Activated T-helper 1 cell treated with anti-CD3 and anti-CD28 coated beads, Interleukin-12 subunit alpha, Interleukin-12 subunit beta, Interleukin-2, Interleukin-4 antibody, amounts not matched to agents 30 ng/mL and 10 ng/mL and 1 ng/mL, durations not matched to agents 14 hours and 24 hours and 36 hours (primary cell): ENCODE measurements at regions of chr4 and their contacts with region 1.

Region 1: DNA sequence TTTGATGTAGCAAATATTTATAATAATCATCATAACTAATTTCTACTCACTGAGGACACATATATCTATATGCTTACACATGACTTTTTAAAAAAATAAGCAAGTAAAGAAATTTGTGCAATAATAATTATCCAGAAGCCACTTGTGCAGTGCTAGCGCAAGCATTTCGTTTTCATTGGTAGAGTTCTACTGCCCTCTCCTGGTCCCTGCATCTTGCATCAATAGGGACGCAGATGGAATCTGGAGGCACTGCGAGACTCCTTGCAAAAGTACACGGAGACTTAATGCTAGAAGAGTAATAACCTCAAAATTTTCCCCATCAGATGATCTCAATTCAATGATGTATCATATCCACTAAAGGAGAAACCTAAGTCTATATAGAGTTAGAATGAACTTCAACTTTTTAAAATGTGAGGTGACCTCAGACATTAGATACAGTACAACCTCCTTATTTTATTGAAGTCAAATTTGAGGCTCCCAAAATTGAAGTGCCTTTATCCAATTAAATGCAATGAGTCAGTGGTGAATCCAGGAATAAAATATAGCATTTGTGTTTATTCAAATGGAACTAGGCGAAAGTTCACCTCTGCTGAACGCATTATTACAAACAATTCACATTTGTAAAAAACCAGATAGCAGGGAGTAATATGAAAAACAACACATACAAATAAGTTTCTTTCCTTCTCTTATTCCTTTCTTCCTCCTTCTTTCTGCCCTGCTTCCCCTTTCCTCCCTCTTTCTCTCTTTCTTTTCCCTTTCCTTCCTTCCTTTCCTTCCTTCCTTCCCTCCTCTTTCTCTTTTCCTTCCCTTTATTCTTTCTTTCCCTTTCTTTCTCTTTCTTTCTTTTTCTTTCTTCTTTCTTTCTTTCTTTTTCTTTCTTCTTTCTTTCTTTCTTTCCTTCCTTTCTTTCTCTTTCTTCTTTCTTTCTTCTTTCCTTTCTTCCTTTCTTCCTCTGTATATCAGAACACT is 450.0 kb downstream of the ANKRD50 start:
- DNase-seq: peak; percentile 2
- H3K4me3 Mint-ChIP-seq: no peak overlapping the region
- H3K27ac Mint-ChIP-seq: no peak overlapping the region
- H3K4me1 Mint-ChIP-seq: no peaks in the 10 kb centered on the region
- H3K27me3 Mint-ChIP-seq: peaks cover 2% of the 10 kb centered on the region

Region 2: GRCh38 chr4:123390846-123391456 is 871.5 kb before region 1 on chr4:
- intact Hi-C with region 1: loop called (anchors 1 kb)
- DNase-seq: no peak
- H3K4me3 Mint-ChIP-seq: no peak overlapping the region
- H3K27ac Mint-ChIP-seq: no peak overlapping the region
- H3K4me1 Mint-ChIP-seq: peaks cover 10% of the 10 kb centered on the region
- H3K27me3 Mint-ChIP-seq: peaks cover 23% of the 10 kb centered on the region

Region 3: GRCh38 chr4:123776254-123776653 is 486.2 kb before region 1 on chr4:
- intact Hi-C with region 1: loop called (anchors 1 kb)
- DNase-seq: no peak
- H3K4me3 Mint-ChIP-seq: no peak overlapping the region
- H3K27ac Mint-ChIP-seq: no peak overlapping the region
- H3K4me1 Mint-ChIP-seq: no peaks in the 10 kb centered on the region
- H3K27me3 Mint-ChIP-seq: peaks cover 2% of the 10 kb centered on the region